ENCODE measurements at regions of chr9 and their contacts with region 1.

Region 1: DNA sequence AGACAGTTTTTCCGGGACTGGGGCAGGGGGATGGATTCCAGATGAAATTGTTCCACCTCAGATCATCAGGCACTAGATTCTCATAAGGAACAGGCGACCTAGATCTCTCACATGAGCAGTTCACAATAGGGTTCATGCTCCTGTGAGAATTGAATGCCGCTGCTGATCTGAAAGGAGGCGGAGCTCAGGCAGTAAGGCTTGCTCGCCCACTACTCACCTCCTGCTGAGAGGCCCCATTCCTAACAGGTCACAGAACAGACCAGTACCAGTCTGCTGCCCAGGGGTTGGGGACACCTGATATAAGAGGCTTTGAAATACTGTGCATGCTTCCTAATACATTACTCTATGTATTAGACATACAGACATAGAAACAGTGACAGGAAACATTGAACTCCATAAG is 41.1 kb downstream of the PTPRD start:
- H3K4me3 Mint-ChIP-seq: no peak overlapping the region
- H3K27ac Mint-ChIP-seq: no peak overlapping the region
- H3K4me1 Mint-ChIP-seq: no peaks in the 10 kb centered on the region
- H3K27me3 Mint-ChIP-seq: no peaks in the 10 kb centered on the region

Region 2: GRCh38 chr9:10268531-10269485 is 302.9 kb before region 1 on chr9:
- intact Hi-C with region 1: no loop called
- H3K4me3 Mint-ChIP-seq: no peak overlapping the region
- H3K27ac Mint-ChIP-seq: no peak overlapping the region
- H3K4me1 Mint-ChIP-seq: no peaks in the 10 kb centered on the region
- H3K27me3 Mint-ChIP-seq: no peaks in the 10 kb centered on the region

Region 3: DNA sequence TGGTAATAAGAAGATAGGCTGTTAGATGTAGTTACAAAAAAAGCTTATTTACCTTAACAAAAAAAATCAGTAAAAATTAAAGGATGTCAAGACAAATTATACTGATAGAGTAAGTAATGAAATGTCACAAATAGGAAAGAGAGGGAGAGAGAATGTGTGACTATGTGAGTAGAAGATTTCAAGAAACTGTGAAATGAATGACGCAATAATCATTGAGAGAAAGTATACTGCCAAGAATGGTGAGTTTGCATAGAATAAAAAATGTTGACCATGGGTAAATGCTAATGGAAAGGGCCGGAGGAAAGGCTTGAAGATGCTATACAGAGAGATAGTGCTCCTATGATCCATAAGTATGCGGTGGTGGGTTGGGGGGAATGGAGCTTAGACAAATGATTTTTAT is 59.6 kb before region 1 on chr9:
- intact Hi-C with region 1: loop called (anchors 10 kb)
- H3K4me3 Mint-ChIP-seq: no peak overlapping the region
- H3K27ac Mint-ChIP-seq: no peak overlapping the region
- H3K4me1 Mint-ChIP-seq: no peaks in the 10 kb centered on the region
- H3K27me3 Mint-ChIP-seq: no peaks in the 10 kb centered on the region

Measured in dendritic cell treated with granulocyte-macrophage colony-stimulating factor and Interleukin-4, amounts not matched to agents 40 ng/mL and 50 ng/mL, for 4 days (primary cell).